A549 (cell line): ENCODE measurements at regions of chr17 and their contacts with region 1.

Region 1: GRCh38 chr17:57597531-57598453 is 147.3 kb downstream of the CCDC182 start:
- DNase-seq: peak; percentile 82 to 86
- ATAC-seq: peak; percentile 85 to 93
- H3K4me3 ChIP-seq: no peak overlapping the region
- H3K27ac ChIP-seq: peak overlapping the region; percentile 46 to 54; a peak in 5 of 6 replicates
- H3K4me1 ChIP-seq: peaks cover 15% of the 10 kb centered on the region
- CTCF ChIP-seq: peak; percentile 97
- EP300 ChIP-seq: no peak
- POLR2A ChIP-seq: no peak
- RAD21 ChIP-seq: peak; percentile 86 to 87

Region 2: DNA sequence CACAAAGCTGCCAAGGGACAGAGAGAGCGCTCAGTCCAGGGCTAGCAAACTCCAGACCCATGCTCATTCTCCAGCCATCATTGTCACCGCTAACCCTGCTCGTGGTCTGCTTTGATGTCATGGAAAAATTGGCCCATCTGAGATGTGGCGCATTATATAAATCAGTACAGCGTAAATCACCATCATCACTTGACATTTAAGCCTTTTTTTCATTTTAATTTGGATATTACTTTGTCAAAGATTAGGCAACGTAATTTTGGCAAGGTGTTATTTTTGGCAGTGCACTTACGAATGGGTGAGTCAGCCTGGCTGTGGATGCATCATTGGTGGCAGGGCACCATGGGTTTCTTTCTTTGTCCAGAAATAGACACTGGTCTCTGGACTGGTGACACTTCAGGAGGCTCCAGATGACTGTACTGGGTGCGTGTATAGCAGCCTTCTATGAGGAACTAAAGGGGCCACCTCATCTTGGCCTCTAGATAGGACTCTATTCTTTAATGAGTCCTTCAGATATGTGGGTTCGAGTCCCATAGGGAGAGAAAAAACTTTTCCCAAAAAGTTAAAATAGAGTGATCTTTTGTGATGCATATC is 175.1 kb before region 1 on chr17:
- CTCF ChIA-PET with region 1: no interaction called
- POLR2A ChIA-PET with region 1: no interaction called
- DNase-seq: peak in 1 of 2 experiments; percentile 31
- ATAC-seq: peak; percentile 48 to 59; a peak in 4 of 6 replicates
- H3K4me3 ChIP-seq: no peak overlapping the region
- H3K27ac ChIP-seq: no peak overlapping the region
- H3K4me1 ChIP-seq: peaks cover 31% of the 10 kb centered on the region
- CTCF ChIP-seq: no peak
- EP300 ChIP-seq: no peak
- POLR2A ChIP-seq: no peak
- RAD21 ChIP-seq: no peak

Region 3: DNA sequence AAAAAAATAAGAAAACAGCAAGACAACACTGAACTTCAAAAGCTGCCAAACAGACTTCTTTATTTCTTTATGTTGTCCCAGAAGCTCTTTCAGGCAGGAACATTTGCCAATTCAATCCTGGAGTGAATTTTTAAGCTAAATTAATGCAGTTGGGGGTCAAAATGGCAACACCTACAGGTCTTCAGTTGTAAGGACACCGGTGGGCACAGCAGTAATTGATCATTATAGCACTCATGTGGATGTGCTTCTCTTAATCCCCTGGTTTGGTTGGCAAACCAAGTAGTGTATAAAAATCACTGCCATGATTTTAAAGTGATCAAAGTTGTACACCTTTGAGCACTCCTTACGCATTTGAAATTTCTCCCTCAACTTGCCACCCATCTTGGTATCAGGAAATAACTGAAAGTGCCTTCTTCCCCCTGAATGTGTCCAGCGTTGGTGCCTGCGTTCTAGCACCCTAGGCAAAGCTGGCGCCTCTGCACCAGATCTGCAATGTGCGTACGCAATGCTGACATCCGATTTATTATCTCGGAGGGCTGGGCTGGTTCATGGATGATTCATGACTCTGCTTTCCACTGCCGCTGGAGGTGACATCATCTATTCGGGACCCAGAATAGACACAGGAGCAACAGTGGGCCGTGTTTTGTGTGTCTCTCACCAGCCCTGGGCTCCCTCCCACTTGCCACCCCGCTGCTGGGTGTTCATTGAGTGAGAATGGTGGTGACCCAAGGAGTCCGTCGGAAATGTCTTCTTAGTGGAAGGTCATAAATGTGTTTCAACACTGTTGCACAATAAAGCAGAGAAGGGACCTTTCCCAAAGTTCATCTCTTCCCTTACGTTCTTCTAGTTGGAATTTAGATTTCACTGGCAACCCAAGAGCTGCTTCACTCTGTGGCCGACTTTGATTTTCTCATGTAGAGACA is 56.1 kb before region 1 on chr17:
- CTCF ChIA-PET with region 1: interaction called, 24 read pairs
- POLR2A ChIA-PET with region 1: no interaction called
- DNase-seq: peak; percentile 85 to 97
- ATAC-seq: peak; percentile 97
- H3K4me3 ChIP-seq: 0 out of 3 replicates have a peak overlapping the region, but pooled peaks have one; percentile 5
- H3K27ac ChIP-seq: peak overlapping the region; percentile 69 to 75
- H3K4me1 ChIP-seq: peaks cover 70% of the 10 kb centered on the region
- CTCF ChIP-seq: no peak
- EP300 ChIP-seq: 0 out of 5 replicates have a peak, but pooled peaks of 1 of the 2 experiments have one; percentile 45
- POLR2A ChIP-seq: 0 out of 2 replicates have a peak, but pooled peaks have one; percentile 13
- RAD21 ChIP-seq: peak in 1 of 2 experiments; percentile 38; a peak in 2 of 5 replicates

Region 4: GRCh38 chr17:57584050-57584551 is 13.7 kb before region 1 on chr17:
- CTCF ChIA-PET with region 1: interaction called, 62 read pairs
- POLR2A ChIA-PET with region 1: no interaction called
- DNase-seq: no peak
- ATAC-seq: no peak
- H3K4me3 ChIP-seq: no peak overlapping the region
- H3K27ac ChIP-seq: no peak overlapping the region
- H3K4me1 ChIP-seq: peaks cover 12% of the 10 kb centered on the region; the same call in 1 of the 3 replicates
- CTCF ChIP-seq: no peak
- EP300 ChIP-seq: no peak
- POLR2A ChIP-seq: no peak
- RAD21 ChIP-seq: no peak

Region 5: DNA sequence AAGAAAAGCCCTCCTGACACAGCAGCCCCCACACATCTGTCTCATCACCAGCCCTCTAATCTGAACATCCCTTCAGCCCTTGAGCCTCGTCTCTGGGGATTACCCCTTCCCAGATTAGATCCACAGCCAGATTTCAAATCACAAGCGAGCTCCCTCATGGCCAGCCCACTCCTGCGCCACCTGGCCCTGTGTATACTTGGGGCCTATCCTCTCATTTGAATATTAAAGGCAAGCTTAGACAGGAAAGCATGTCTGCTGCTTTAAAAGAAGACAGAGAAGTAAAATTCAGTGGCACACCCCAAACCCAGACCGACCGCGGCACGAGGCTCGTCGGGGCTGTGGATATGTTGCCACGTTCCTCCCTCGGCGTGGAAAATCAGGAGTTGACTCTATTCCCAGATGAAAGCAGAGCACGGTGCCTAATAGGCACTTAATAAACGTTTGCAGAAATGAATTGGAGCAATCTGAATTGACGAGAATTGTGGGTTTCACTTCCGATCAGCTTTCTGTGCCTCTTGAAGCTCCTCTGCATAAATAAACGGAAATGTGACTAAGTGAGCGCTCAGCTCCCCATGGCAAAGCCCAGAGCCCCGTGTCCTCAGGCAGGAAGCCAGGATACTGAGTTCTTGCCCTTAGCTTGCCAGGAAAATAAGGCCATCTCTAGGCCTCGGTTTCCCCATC is 39.3 kb after region 1 on chr17:
- CTCF ChIA-PET with region 1: interaction called, 12 read pairs
- POLR2A ChIA-PET with region 1: no interaction called
- DNase-seq: no peak
- ATAC-seq: no peak
- H3K4me3 ChIP-seq: no peak overlapping the region
- H3K27ac ChIP-seq: no peak overlapping the region
- H3K4me1 ChIP-seq: no peaks in the 10 kb centered on the region
- CTCF ChIP-seq: no peak
- EP300 ChIP-seq: no peak
- POLR2A ChIP-seq: no peak
- RAD21 ChIP-seq: no peak

Region 6: GRCh38 chr17:57662644-57663308 is 65.0 kb after region 1 on chr17:
- CTCF ChIA-PET with region 1: interaction called, 18 read pairs
- POLR2A ChIA-PET with region 1: no interaction called
- DNase-seq: peak; percentile 37 to 64
- ATAC-seq: peak; percentile 62 to 90; a peak in 4 of 6 replicates
- H3K4me3 ChIP-seq: no peak overlapping the region
- H3K27ac ChIP-seq: no peak overlapping the region
- H3K4me1 ChIP-seq: peaks cover 4% of the 10 kb centered on the region; the same call in 1 of the 3 replicates
- CTCF ChIP-seq: no peak
- EP300 ChIP-seq: no peak
- POLR2A ChIP-seq: no peak
- RAD21 ChIP-seq: no peak